MCF 10A (cell line): ENCODE measurements at regions of chr7 and their contacts with region 1.

Region 1: DNA sequence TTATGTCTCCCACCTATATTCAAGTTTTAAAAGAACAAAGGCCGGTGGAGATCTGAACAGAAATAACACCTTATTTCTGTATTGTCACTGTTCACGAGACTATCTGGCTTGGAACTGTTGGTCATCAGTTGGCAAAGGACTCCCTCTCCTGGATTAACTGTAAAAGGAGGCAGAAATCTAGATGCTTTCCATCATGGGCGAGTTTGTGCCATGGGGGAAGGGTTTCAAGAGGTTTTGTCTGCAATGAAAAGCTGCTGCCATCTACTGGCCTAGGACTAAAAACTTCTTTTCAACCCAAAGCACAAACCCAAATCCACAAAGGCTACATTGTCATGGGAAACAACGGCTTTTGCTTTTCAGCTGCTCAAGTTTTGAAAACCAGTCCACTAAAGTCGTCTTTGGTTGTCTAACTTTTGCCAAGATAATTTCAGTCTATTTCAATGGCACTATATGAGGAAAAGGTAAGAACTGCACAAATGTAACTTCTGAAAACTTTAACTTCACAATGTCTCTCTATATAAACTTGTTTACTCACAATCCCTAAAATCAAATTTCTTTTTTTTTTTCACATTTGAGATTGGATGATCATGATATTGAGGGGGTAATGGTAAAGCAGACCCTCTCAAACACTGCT is 196.8 kb downstream of the SKAP2 start:
- DNase-seq: peak; percentile 96
- H3K4me3 Mint-ChIP-seq: no peak overlapping the region
- H3K27ac Mint-ChIP-seq: no peak overlapping the region
- H3K4me1 Mint-ChIP-seq: peaks cover 16% of the 10 kb centered on the region
- H3K27me3 Mint-ChIP-seq: no peaks in the 10 kb centered on the region
- CTCF ChIP-seq: peak; percentile 90

Region 2: DNA sequence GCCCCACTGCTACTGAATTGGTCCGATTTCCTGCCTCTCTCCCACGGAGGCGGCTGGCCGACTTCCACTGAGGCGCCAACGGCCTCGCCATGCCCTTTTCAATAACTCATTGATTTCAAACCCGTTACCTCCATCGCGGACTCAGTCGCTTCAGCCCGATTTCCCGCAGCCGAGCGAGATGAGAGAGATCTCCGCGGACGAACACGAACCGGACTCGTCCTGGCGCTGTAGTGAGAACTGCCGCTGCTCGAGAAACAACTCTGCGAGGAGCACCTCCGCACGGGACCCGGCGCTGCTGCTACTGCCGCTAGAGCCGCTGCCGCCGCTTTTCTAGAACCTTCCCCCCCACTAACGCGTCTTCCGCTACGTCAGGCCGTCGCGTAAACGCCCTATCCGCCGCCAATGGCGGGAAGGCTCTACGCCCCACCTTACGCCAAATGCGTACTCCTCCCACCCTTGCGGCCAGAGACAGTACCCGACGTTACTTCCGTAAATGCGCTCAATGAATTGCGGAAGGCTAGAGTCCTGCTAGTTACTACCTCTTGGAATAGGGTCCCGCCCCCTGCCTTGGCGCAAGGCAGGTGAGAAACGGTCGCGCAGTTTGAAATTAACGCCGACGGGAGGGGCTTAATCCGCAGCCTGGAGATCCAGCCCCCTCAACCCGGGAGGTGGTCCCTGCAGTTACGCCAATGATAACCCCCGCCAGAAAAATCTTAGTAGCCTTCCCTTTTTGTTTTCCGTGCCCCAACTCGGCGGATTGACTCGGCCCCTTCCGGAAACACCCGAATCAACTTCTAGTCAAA is 467.0 kb before region 1 on chr7 and contains the start of gene HNRNPA2B1:
- CTCF ChIA-PET with region 1: interaction called, 3 read pairs
- POLR2A ChIA-PET with region 1: interaction called, 4 read pairs
- intact Hi-C with region 1: loop called (anchors 2 kb)
- DNase-seq: peak; percentile 98
- H3K4me3 Mint-ChIP-seq: peak within 1 kb of the TSS; percentile 98
- H3K27ac Mint-ChIP-seq: peak within 1 kb of the TSS; percentile 99
- H3K4me1 Mint-ChIP-seq: peaks cover 37% of the 10 kb centered on the region
- H3K27me3 Mint-ChIP-seq: no peaks in the 10 kb centered on the region
- CTCF ChIP-seq: no peak
- total RNA-seq, gene HNRNPA2B1: 592 and 646 TPM in 2 replicates

Region 3: DNA sequence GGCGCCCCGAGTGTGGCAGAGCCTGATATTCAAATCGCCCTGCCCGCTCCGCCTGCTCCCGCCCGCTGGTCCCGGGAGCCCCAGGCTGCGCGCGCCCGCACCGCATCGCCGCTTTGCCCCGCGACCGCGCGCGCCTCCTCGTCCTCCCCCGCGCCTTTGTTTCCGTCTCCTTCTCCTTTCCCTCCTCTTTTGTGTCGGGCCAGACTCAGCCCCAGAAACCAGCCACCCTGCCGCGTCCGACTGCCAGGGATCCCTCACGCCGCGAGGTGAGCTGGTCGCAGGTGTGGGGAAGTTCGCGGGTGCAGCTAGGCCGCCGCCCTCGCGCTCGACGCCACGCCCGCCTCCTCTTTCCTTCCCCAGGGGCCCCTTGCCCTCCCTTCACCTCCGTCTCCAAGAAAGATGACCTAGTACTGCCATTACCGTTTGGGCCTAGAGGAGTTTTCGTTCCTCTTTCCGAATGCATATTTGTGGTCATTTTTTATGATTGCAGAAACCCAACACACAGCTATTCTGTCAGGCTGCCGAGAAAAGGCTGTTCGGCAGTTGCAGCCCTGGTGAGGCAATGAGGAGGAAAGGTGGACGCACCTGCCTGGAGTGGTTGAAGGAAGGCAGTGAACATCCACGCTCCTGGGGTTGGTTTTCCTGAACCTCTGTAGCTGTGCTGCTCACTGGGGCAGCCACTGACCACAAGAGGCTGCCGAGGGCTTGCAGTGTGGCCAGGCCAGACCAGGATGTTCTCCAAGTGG is 268.7 kb before region 1 on chr7:
- CTCF ChIA-PET with region 1: interaction called, 10 read pairs
- POLR2A ChIA-PET with region 1: no interaction called
- intact Hi-C with region 1: no loop called
- DNase-seq: peak; percentile 37
- H3K4me3 Mint-ChIP-seq: peak overlapping the region; percentile 97
- H3K27ac Mint-ChIP-seq: peak overlapping the region; percentile 59
- H3K4me1 Mint-ChIP-seq: peaks cover 9% of the 10 kb centered on the region
- H3K27me3 Mint-ChIP-seq: no peaks in the 10 kb centered on the region
- CTCF ChIP-seq: no peak

Region 4: GRCh38 chr7:26500749-26501352 is 166.8 kb before region 1 on chr7:
- CTCF ChIA-PET with region 1: interaction called, 7 read pairs
- POLR2A ChIA-PET with region 1: interaction called, 3 read pairs
- intact Hi-C with region 1: loop called (anchors 1 kb)
- DNase-seq: peak; percentile 53
- H3K4me3 Mint-ChIP-seq: no peak overlapping the region
- H3K27ac Mint-ChIP-seq: no peak overlapping the region
- H3K4me1 Mint-ChIP-seq: no peaks in the 10 kb centered on the region
- H3K27me3 Mint-ChIP-seq: no peaks in the 10 kb centered on the region
- CTCF ChIP-seq: peak; percentile 52

Region 5: GRCh38 chr7:27160546-27161213 is 493.1 kb after region 1 on chr7:
- CTCF ChIA-PET with region 1: interaction called, 9 read pairs
- POLR2A ChIA-PET with region 1: interaction called, 4 read pairs
- intact Hi-C with region 1: loop called (anchors 1 kb)
- DNase-seq: peak; percentile 83
- H3K4me3 Mint-ChIP-seq: peak overlapping the region; percentile 84
- H3K27ac Mint-ChIP-seq: no peak overlapping the region
- H3K4me1 Mint-ChIP-seq: peaks cover 8% of the 10 kb centered on the region
- H3K27me3 Mint-ChIP-seq: no peaks in the 10 kb centered on the region
- CTCF ChIP-seq: peak; percentile 96